ENCODE measurements at regions of chr7 and their contacts with region 1.

Region 1: DNA sequence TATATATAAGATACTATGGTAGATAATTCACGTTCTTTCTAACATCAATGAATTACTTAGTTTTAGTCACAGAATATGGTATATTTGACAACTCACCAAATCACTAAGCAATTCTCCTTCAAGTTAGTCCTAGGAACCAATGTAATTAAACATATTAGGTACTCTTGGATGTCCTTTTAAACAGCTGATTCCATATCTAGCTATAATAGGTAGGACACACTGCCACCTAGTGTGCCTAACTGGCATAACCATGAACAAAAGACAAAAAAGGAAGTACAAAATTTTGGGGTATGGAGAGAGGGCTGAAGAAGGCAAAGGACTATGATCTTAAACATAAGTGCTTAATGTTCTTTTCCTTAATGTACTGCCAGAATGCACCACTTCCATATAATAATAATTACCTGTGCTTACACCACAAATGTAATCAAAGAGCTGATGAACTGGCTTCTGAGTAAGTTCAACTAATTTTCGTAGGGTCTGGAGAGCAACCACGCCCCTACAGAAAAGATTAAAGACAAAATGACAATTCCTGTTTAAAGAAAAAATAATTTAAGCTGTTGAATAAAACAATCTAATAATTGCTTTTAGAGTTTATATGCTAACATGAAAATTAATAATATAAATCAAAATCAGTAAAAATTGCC is 28.7 kb downstream of the PNPLA8 start:
- DNase-seq: peak; percentile 57
- ATAC-seq: no peak
- H3K4me3 Mint-ChIP-seq: no peak overlapping the region
- H3K27ac Mint-ChIP-seq: no peak overlapping the region
- H3K4me1 Mint-ChIP-seq: no peaks in the 10 kb centered on the region
- H3K27me3 Mint-ChIP-seq: no peaks in the 10 kb centered on the region

Region 2: GRCh38 chr7:108181073-108181985 is 315.9 kb before region 1 on chr7:
- CTCF ChIA-PET with region 1: interaction called, 30 read pairs
- POLR2A ChIA-PET with region 1: no interaction called
- intact Hi-C with region 1: loop called (anchors 1 kb)
- DNase-seq: no peak
- ATAC-seq: no peak
- H3K4me3 Mint-ChIP-seq: no peak overlapping the region
- H3K27ac Mint-ChIP-seq: no peak overlapping the region
- H3K4me1 Mint-ChIP-seq: no peaks in the 10 kb centered on the region
- H3K27me3 Mint-ChIP-seq: peaks cover 2% of the 10 kb centered on the region

Region 3: DNA sequence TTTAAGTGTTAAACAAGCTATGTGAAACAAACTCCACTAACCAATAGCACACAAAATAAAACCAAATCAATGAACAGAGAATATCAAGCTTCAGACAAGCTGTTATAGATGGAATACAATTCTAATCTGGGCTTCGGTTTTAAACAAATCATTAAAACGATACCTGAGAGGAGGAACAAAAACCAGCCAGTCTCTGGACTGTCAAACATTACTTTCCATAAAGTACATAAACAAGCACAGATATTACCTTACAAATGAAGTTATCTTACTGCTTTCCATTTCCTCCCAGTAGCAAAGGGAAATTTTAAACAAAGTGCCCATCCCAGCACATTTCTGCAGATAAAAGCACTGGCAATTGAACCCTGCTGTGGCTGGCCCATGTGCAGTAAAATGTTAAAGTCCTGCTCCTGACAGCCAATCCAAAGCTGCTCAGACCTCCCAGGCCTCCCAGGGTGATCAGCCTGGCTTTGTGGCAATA is 169.0 kb before region 1 on chr7:
- CTCF ChIA-PET with region 1: no interaction called
- POLR2A ChIA-PET with region 1: no interaction called
- intact Hi-C with region 1: no loop called
- DNase-seq: no peak
- ATAC-seq: no peak
- H3K4me3 Mint-ChIP-seq: no peak overlapping the region
- H3K27ac Mint-ChIP-seq: no peak overlapping the region
- H3K4me1 Mint-ChIP-seq: no peaks in the 10 kb centered on the region
- H3K27me3 Mint-ChIP-seq: no peaks in the 10 kb centered on the region

Region 4: GRCh38 chr7:108384721-108385481 is 112.3 kb before region 1 on chr7:
- CTCF ChIA-PET with region 1: interaction called, 3 read pairs
- POLR2A ChIA-PET with region 1: no interaction called
- intact Hi-C with region 1: loop called in 1 of 2 experiments (anchors 2 kb)
- DNase-seq: no peak
- ATAC-seq: peak; percentile 81
- H3K4me3 Mint-ChIP-seq: no peak overlapping the region
- H3K27ac Mint-ChIP-seq: no peak overlapping the region
- H3K4me1 Mint-ChIP-seq: no peaks in the 10 kb centered on the region
- H3K27me3 Mint-ChIP-seq: peaks cover 4% of the 10 kb centered on the region

Region 5: DNA sequence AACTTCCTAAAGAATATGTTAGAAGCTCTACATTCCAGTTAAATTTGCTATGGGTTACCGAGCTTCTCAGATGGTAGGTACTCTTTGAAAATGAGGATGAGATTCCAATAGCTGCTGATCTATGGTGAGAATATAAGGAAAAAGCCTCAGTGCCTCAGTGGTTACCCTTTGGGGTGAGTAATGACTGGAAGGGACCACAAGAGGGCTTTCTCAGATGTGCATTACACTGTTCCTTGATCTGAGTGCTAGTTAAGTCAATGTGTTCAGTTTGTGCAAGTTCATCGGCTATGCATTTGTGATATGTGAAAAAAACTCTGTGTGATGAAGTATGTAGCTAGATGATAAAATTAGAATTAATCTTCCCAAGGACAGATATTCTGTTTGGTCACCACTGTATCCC is 44.5 kb before region 1 on chr7:
- CTCF ChIA-PET with region 1: interaction called, 8 read pairs
- POLR2A ChIA-PET with region 1: no interaction called
- intact Hi-C with region 1: loop called in 1 of 2 experiments (anchors 1 kb)
- DNase-seq: no peak
- ATAC-seq: no peak
- H3K4me3 Mint-ChIP-seq: no peak overlapping the region
- H3K27ac Mint-ChIP-seq: no peak overlapping the region
- H3K4me1 Mint-ChIP-seq: peaks cover 18% of the 10 kb centered on the region
- H3K27me3 Mint-ChIP-seq: peaks cover 34% of the 10 kb centered on the region

Region 6: GRCh38 chr7:108486291-108486966 is 10.8 kb before region 1 on chr7:
- CTCF ChIA-PET with region 1: interaction called, 16 read pairs
- POLR2A ChIA-PET with region 1: no interaction called
- intact Hi-C with region 1: no loop called
- DNase-seq: no peak
- ATAC-seq: no peak
- H3K4me3 Mint-ChIP-seq: no peak overlapping the region
- H3K27ac Mint-ChIP-seq: no peak overlapping the region
- H3K4me1 Mint-ChIP-seq: no peaks in the 10 kb centered on the region
- H3K27me3 Mint-ChIP-seq: no peaks in the 10 kb centered on the region

Region 7: GRCh38 chr7:108515630-108516029 is 18.4 kb after region 1 on chr7:
- CTCF ChIA-PET with region 1: interaction called, 10 read pairs
- POLR2A ChIA-PET with region 1: interaction called, 7 read pairs
- intact Hi-C with region 1: no loop called
- DNase-seq: no peak
- ATAC-seq: no peak
- H3K4me3 Mint-ChIP-seq: no peak overlapping the region
- H3K27ac Mint-ChIP-seq: no peak overlapping the region
- H3K4me1 Mint-ChIP-seq: peaks cover 10% of the 10 kb centered on the region
- H3K27me3 Mint-ChIP-seq: no peaks in the 10 kb centered on the region